ENCODE measurements at regions of chr1 and their contacts with region 1.

Region 1: DNA sequence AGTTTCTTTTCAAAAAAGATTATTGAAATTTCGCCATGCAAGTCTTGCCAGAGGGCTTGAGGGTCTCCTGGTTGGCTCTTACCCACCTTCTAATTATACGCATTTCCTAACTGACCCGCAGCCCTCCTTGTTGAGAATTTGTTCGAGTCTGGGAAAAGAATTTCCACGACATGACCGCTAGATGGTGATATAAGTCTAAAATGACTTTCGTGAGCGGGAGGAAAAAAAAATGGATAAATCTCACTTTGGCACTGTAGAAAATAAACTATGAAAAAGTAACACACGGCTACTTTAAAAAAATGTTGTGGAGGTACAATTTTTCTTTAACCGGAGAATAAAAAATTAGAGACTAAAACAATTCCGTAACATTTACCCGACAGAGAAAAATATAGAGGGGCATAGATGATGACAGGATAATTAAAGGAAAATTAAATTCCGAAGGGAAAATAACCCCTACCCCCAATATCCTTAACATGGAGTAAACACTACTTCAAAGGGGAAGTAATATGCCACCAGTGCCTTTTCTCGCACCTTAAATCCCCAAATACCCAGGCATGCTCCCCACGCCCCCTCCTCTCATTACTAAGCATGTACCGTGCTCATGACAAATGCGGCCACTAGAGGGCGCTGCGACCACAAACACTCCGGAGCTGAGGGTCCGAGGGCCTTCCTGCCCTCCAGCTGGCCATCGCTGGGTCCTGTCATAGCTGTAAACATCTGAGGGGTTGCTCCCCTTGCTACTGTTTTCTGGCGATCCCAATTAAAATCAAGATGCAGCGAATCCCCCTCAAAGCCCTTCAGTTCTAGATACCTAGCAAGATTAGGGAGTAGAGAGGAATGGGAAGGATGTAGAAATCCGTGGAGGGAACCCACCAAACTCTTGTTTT is 266.9 kb downstream of the ASTN1 start:
- DNase-seq: peak; percentile 82
- H3K4me3 ChIP-seq: peak overlapping the region; percentile 32
- H3K27ac ChIP-seq: no peak overlapping the region
- H3K4me1 ChIP-seq: peaks cover 36% of the 10 kb centered on the region
- H3K27me3 ChIP-seq: no peaks in the 10 kb centered on the region
- CTCF ChIP-seq: peak; percentile 96

Region 2: GRCh38 chr1:177355595-177355994 is 458.0 kb after region 1 on chr1:
- CTCF ChIA-PET with region 1: interaction called, 3 read pairs
- POLR2A ChIA-PET with region 1: no interaction called
- intact Hi-C with region 1: loop called (anchors 1 kb)
- DNase-seq: peak; percentile 41
- H3K4me3 ChIP-seq: no peak overlapping the region
- H3K27ac ChIP-seq: no peak overlapping the region
- H3K4me1 ChIP-seq: peaks cover 10% of the 10 kb centered on the region
- H3K27me3 ChIP-seq: no peaks in the 10 kb centered on the region
- CTCF ChIP-seq: peak; percentile 65

Region 3: GRCh38 chr1:177571485-177572076 is 674.0 kb after region 1 on chr1:
- CTCF ChIA-PET with region 1: no interaction called
- POLR2A ChIA-PET with region 1: no interaction called
- intact Hi-C with region 1: loop called (anchors 10 kb)
- DNase-seq: no peak
- H3K4me3 ChIP-seq: no peak overlapping the region
- H3K27ac ChIP-seq: no peak overlapping the region
- H3K4me1 ChIP-seq: peaks cover 8% of the 10 kb centered on the region
- H3K27me3 ChIP-seq: no peaks in the 10 kb centered on the region
- CTCF ChIP-seq: no peak

Region 4: DNA sequence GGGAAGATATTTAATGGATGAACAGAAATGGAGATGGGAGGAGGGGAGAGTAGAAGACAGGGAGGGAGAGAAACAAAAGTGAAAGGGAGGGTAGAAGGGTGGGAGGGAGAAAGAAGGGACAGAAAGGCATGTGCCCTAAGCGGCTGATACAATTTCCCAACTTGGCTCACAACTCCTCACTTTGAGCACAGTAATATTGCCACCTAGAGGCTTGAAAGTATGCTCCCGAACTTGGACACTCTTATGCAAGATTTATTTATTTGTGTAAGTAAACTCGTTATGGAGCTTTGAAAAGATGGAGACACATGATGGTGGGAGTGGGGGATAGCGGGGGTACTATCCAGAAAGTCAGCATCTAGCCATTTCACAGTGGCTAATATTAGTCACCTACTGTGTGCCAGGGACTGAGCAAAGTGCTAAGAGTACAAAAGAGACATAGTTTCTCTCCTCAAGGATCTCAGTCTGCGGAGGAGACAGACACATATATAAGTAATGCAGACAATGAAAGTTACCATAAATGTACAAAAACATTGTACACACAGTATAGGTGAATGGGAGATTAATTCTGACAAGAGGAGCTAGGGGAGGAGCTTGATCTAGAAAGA is 882.6 kb after region 1 on chr1:
- CTCF ChIA-PET with region 1: interaction called, 7 read pairs
- POLR2A ChIA-PET with region 1: no interaction called
- intact Hi-C with region 1: loop called (anchors 1 kb)
- DNase-seq: peak; percentile 96
- H3K4me3 ChIP-seq: no peak overlapping the region
- H3K27ac ChIP-seq: peak overlapping the region; percentile 81
- H3K4me1 ChIP-seq: peaks cover 34% of the 10 kb centered on the region
- H3K27me3 ChIP-seq: no peaks in the 10 kb centered on the region
- CTCF ChIP-seq: peak; percentile 84

Region 5: DNA sequence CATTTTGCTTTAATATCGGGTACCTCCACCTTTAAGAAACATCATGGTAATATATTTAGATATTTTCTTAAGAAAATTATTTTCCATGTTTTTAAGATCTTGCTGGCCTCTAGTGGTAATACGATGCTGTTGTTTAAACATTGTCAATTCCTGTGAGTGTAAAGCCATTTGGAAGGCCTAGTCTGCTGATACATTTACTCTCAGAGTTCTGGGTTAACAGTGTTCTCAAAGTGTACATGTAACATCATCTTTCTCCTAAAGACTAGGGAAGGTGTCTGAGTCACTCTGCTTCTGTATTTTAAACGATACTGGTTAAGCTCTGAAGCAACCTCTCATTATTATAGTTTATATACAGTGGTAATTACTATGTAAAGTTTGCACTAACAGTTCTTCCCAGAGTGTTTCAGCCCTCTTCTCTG is 1385.4 kb after region 1 on chr1:
- CTCF ChIA-PET with region 1: no interaction called
- POLR2A ChIA-PET with region 1: no interaction called
- intact Hi-C with region 1: loop called (anchors 10 kb)
- DNase-seq: peak; percentile 46
- H3K4me3 ChIP-seq: no peak overlapping the region
- H3K27ac ChIP-seq: no peak overlapping the region
- H3K4me1 ChIP-seq: no peaks in the 10 kb centered on the region
- H3K27me3 ChIP-seq: no peaks in the 10 kb centered on the region
- CTCF ChIP-seq: peak; percentile 58